Posterior cingulate gyrus (tissue), 11 donors: ENCODE measurements at regions of chr13 and their contacts with region 1.

Region 1: DNA sequence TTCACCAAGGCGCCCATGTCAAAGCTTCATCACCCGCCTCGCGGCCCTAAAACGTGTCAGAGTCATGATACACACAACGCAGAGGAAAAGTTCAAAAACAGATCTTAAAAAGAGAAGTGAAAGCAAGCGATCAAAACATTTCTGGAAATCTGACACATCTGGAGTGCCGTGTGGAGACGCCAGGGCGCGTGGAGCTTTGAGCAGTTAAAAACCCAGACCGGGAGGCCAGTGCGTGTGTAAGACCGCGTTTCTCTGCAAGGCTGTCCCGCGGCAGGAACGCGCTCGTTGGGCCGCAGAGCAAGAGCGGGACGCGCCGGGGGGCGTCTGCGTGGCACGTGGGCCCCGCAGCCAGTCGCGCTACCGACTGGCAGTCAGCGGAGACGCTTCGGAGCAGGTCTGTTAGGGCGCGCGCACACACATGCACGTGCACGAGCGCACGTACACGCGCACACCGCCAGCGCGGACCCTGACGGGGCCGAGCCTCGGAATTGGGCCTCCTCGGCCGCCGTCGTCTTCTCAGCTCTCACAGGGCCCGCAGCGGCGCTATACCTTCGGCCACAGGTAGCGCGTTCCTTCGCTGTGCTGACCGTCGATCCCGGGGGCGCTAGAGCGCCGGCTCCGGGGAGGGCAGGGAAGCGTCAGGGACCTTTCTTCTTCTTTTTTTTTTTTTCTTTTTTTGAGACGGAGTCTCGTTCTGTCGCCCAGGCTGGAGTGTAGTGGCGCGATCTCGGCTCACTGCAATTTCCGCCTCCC is 35.8 kb downstream of the RNF6 start:
- DNase-seq: peak; percentile 66 to 98 (median 78)

Region 2: GRCh38 chr13:26221721-26222519 is 35.6 kb after region 1 on chr13 and contains the start of gene RNF6:
- intact Hi-C with region 1: loop called (anchors 2 kb)
- DNase-seq: peak; percentile 83 to 98 (median 93)

Region 3: GRCh38 chr13:26482451-26483197 is 296.3 kb after region 1 on chr13:
- intact Hi-C with region 1: loop called (anchors 5 kb)
- DNase-seq: peak in 5 of 10 donors; percentile 40 to 59 (median 49)

Region 4: DNA sequence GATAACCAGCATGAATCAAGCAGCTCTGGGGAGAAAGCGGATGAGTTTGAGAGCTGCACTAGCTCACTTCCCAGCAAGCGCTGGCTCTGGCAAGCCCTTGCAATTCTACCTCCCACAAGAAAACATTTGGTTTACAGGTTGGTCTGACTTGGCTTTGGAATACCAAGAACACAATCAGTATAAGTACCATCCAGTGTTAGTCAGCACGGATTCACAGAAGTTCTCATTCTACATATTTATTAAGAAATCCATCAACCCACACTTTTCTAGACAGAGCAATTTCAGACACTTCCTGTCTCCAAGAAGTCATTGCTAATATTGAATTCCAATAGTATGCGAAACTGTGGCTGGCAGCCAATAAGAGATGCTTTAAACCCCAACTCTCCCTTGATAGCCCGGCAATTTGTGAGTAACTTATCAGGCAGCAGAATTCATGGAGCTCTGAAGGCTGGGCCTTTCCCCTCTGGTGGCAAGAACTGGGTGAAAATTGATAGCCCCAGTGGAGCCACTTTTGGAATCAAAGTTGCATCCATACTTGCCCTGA is 311.7 kb after region 1 on chr13:
- intact Hi-C with region 1: loop called (anchors 1 kb)
- DNase-seq: no peak